PC-3 (cell line): ENCODE measurements at regions of chr20 and their contacts with region 1.

Region 1: DNA sequence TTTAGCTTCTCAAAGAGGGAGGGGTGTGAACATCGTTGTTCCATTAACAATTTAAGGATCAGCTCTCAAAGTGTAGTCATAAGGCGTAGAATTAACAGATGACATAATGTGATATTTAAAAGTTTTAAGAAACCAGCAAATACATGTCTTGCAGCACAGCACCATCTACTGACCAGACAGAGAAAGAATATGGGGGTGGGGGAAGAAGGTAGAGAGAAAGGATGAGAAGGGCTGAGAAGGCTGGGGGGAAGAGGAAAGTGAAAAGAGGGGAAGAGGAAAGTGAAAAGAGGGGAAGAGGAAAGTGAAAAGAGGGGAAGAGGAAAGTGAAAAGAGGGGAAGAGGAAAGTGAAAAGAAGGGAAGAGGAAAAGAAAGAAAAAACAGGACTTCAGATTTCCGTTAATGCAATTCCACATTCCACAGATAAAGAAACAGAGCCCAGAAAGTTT is 80.9 kb downstream of the HAO1 start:
- DNase-seq: peak; percentile 84
- ATAC-seq: peak; percentile 60
- H3K4me3 ChIP-seq: no peak overlapping the region
- H3K27ac ChIP-seq: peak overlapping the region; percentile 96
- H3K4me1 ChIP-seq: peaks cover 44% of the 10 kb centered on the region
- H3K27me3 ChIP-seq: no peaks in the 10 kb centered on the region
- CTCF ChIP-seq: peak; percentile 95

Region 2: DNA sequence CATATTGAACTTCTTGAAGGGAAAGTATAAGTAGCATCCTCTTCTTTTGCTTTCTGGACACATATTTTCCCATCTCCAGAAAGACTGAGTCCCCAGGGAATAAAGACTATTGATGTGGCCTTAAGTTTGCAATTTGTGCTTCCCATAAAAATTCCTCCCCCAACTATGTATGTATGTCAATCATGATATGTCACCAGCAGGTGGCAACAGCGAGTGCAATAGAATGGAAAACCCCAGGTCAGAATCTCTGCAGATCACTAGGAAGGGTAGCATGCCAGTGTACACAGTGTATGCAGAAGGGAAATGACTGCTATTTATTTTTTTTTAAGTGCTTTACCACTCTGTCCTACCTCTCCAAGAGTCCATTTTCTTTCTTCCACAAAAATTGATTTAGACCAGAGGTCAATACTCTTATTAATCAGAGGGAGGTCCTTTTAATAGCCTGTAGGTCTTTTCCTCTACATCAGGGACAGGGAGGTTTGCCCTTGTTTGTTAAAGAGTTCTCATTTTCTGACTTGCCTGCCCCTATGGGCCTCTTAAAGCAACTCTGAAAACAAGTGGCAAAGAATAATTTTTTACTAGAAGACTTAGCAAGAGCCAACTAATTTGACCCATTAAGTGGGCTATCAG is 1030.5 kb before region 1 on chr20:
- CTCF ChIA-PET with region 1: no interaction called
- POLR2A ChIA-PET with region 1: no interaction called
- intact Hi-C with region 1: loop called (anchors 2 kb)
- DNase-seq: peak; percentile 85
- ATAC-seq: peak; percentile 89
- H3K4me3 ChIP-seq: no peak overlapping the region
- H3K27ac ChIP-seq: no peak overlapping the region
- H3K4me1 ChIP-seq: peaks cover 5% of the 10 kb centered on the region; the same call in 1 of the 2 replicates
- H3K27me3 ChIP-seq: peaks cover 25% of the 10 kb centered on the region
- CTCF ChIP-seq: peak; percentile 83

Region 3: DNA sequence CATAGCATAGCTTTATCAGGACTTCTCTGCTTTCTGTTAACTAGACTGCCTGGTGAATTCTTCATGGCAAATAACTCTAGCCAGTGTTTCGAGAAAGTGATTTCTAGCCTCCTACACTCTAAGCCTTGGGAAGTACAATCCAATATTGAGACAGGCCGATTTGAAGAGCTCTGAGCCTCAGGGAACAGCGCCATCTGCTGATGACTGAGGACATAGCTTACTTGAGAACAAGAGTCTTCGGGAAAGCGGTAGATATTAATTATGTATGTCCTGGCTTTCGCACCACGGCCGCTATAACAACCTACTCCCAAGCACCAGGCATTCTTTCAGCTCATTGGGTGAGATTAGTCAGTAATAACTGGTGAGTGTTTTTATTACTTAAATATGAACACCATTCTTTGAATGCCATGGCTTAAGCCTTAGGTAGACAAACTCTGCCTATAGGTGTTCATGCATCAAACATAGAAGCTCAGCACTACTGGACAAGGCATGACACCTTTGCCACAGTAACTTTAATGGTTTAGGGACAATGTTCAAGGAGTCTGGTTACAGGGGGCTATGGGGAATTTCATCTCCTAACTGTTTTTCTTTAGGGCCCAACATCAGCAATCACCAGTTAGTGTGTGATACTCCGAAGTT is 573.3 kb before region 1 on chr20:
- CTCF ChIA-PET with region 1: interaction called, 5 read pairs
- POLR2A ChIA-PET with region 1: no interaction called
- intact Hi-C with region 1: loop called (anchors 1 kb)
- DNase-seq: peak; percentile 92
- ATAC-seq: peak; percentile 93
- H3K4me3 ChIP-seq: no peak overlapping the region
- H3K27ac ChIP-seq: no peak overlapping the region
- H3K4me1 ChIP-seq: no peaks in the 10 kb centered on the region
- H3K27me3 ChIP-seq: peaks cover 59% of the 10 kb centered on the region
- CTCF ChIP-seq: peak; percentile 95

Region 4: DNA sequence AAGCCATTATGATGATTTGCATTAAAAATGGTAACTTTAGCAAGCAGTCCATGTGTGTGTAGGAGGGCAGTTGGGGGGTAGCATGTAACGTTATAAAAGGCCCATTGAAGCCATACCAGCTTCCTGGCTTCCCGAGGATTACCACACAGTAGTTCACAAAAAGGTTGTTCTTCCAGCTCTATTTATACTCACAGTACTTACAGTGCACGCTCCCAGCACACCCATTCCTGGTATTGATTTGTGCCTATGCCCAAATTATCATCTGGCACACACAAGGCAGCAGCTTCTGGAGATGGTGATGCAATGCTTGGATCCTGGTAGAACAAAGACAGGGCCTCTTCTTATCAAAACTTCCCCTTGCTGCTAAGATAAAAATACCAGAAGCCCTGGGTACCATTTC is 355.9 kb before region 1 on chr20:
- CTCF ChIA-PET with region 1: no interaction called
- POLR2A ChIA-PET with region 1: no interaction called
- intact Hi-C with region 1: loop called (anchors 5 kb)
- DNase-seq: no peak
- ATAC-seq: no peak
- H3K4me3 ChIP-seq: no peak overlapping the region
- H3K27ac ChIP-seq: no peak overlapping the region
- H3K4me1 ChIP-seq: peaks cover 3% of the 10 kb centered on the region; the same call in 1 of the 2 replicates
- H3K27me3 ChIP-seq: no peaks in the 10 kb centered on the region
- CTCF ChIP-seq: no peak

Region 5: GRCh38 chr20:7667194-7667593 is 192.2 kb before region 1 on chr20:
- CTCF ChIA-PET with region 1: interaction called, 4 read pairs
- POLR2A ChIA-PET with region 1: no interaction called
- intact Hi-C with region 1: loop called (anchors 2 kb)
- DNase-seq: peak; percentile 91
- ATAC-seq: peak; percentile 96
- H3K4me3 ChIP-seq: no peak overlapping the region
- H3K27ac ChIP-seq: peak overlapping the region; percentile 32; the same call in 1 of the 2 replicates
- H3K4me1 ChIP-seq: peaks cover 11% of the 10 kb centered on the region
- H3K27me3 ChIP-seq: no peaks in the 10 kb centered on the region
- CTCF ChIP-seq: no peak

Region 6: DNA sequence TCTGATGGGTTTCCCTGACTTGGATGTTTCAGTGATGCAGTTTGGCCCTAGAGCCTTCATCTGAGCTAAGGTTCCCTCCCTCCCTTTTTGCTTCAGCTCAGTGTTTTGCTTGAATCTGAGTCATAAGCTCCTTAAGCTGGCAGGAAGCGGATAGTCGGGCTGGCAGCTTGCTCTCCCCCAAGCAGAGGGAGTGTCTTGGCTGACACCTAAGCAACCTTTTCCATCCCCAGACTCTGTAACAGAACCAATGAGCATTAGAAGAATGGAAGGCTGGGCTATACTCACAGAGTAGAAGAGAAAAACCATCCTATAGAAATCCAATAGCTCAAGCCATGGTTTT is 17.4 kb before region 1 on chr20:
- CTCF ChIA-PET with region 1: interaction called, 3 read pairs
- POLR2A ChIA-PET with region 1: no interaction called
- intact Hi-C with region 1: loop called (anchors 2 kb)
- DNase-seq: peak; percentile 96
- ATAC-seq: peak; percentile 85
- H3K4me3 ChIP-seq: peak overlapping the region; percentile 42; the same call in 1 of the 2 replicates
- H3K27ac ChIP-seq: peak overlapping the region; percentile 99
- H3K4me1 ChIP-seq: peaks cover 56% of the 10 kb centered on the region
- H3K27me3 ChIP-seq: no peaks in the 10 kb centered on the region
- CTCF ChIP-seq: no peak

Region 7: DNA sequence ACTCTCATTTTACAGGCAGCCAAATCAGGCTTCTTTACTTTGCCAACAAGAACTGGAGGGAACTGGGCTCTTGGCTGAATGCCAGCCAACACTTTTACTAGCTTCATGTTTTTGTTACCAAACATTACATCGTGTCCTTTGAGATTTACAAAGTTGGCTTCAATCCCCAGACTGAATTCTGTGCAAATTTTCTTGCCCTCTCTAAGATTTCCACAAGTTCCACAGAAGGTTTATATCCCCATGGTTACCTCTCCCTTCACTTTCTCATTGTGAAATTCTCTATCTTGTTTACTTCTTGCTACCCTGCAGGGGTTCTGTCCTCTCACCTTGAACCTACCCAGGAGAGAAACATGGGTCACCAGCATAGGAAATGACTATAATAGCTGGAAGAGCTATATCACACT is 235.0 kb after region 1 on chr20:
- CTCF ChIA-PET with region 1: no interaction called
- POLR2A ChIA-PET with region 1: no interaction called
- intact Hi-C with region 1: no loop called
- DNase-seq: peak; percentile 46
- ATAC-seq: 0 out of 2 replicates have a peak, but pooled peaks have one; percentile 15
- H3K4me3 ChIP-seq: no peak overlapping the region
- H3K27ac ChIP-seq: peak overlapping the region; percentile 49
- H3K4me1 ChIP-seq: peaks cover 12% of the 10 kb centered on the region; the same call in 1 of the 2 replicates
- H3K27me3 ChIP-seq: peaks cover 25% of the 10 kb centered on the region; the same call in 1 of the 2 replicates
- CTCF ChIP-seq: no peak